ENCODE measurements at regions of chr2 and their contacts with region 1.

Region 1: DNA sequence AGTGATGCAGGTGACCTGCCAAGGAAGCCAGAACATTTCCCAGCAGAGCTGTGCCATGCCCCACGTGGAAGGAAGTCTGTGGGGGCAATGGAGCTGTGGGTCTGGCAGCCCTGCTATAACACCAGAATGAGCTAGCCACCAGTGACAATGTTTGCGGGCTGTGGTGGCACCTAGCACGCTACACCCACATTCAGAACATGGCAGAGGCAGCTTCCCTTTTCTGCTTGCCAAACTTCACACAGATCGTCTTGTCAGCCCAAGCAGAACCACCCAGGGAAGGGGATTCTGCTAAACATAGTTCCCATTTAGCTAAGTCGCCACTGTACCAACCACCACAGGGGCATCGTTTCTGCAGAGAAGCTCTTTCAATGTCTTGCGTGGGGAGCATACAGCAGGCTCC is 27.0 kb upstream of the CCDC93 start:
- DNase-seq: no peak
- ATAC-seq: no peak
- H3K4me3 ChIP-seq: no peak overlapping the region
- H3K27ac ChIP-seq: no peak overlapping the region
- H3K4me1 ChIP-seq: no peaks in the 10 kb centered on the region
- H3K27me3 ChIP-seq: peaks cover 0 to 10% of the 10 kb centered on the region in 2 experiments; a peak in 3 of 5 replicates
- CTCF ChIP-seq: no peak
- EP300 ChIP-seq: no peak
- POLR2A ChIP-seq: no peak
- RAD21 ChIP-seq: no peak

Region 2: DNA sequence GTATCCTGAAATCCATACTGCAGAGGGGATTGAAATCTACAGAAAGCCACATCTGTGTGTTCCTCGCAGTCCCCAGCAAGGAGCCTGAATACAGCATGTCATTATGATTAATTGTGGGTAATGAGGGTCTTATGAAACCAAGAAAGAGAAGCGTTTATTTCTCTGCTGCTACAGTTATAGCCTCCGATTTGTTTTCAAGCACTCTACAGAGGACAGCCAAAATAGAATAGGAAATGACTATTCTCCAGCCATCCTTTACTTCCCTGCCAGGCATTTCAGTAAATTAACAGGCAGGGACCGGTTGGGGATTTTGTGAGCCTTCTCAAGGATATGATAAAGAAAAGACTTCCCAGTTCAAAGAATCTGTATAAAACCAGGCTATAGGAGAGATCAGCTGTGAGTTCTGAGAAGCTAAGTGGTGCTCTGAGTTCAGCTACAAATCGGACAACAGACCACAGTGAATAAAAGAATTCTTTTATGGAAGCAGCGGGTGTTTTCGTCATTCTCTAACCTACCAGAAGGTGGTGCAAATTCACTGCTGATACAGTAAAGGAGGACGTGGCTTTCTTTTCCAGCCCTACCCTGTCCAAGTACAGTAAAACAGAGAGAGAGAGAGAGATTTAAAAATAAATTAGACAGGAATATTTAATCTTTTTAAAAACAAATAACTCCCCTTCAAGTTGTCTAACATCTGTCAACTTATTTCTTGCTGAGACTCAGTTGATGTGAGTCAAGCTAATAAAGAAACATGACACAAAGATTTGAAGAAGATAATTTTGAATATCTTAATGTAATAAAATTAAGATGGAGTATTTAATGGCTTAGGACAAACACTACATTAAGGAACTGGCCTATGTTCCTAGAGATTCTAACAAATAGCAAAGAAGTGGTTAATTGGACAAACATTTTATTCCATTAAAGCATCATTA is 181.0 kb after region 1 on chr2:
- CTCF ChIA-PET with region 1: no interaction called
- POLR2A ChIA-PET with region 1: no interaction called
- in situ Hi-C with region 1: no loop called
- intact Hi-C with region 1: loop called (anchors 5 kb)
- DNase-seq: peak; percentile 46 to 58 (median 51)
- ATAC-seq: peak; percentile 89
- H3K4me3 ChIP-seq: no peak overlapping the region
- H3K27ac ChIP-seq: no peak overlapping the region
- H3K4me1 ChIP-seq: peaks cover 0 to 7% of the 10 kb centered on the region in 2 experiments; a peak in 1 of 5 replicates
- H3K27me3 ChIP-seq: peaks cover 15 to 26% of the 10 kb centered on the region in 2 experiments
- CTCF ChIP-seq: peak; percentile 58 to 77 (median 61); a peak in 5 of 6 replicates
- EP300 ChIP-seq: no peak
- POLR2A ChIP-seq: no peak
- RAD21 ChIP-seq: peak; percentile 72 to 79

Measured in K562 (cell line).